ENCODE measurements at regions of chr4 and their contacts with region 1.

Region 1: DNA sequence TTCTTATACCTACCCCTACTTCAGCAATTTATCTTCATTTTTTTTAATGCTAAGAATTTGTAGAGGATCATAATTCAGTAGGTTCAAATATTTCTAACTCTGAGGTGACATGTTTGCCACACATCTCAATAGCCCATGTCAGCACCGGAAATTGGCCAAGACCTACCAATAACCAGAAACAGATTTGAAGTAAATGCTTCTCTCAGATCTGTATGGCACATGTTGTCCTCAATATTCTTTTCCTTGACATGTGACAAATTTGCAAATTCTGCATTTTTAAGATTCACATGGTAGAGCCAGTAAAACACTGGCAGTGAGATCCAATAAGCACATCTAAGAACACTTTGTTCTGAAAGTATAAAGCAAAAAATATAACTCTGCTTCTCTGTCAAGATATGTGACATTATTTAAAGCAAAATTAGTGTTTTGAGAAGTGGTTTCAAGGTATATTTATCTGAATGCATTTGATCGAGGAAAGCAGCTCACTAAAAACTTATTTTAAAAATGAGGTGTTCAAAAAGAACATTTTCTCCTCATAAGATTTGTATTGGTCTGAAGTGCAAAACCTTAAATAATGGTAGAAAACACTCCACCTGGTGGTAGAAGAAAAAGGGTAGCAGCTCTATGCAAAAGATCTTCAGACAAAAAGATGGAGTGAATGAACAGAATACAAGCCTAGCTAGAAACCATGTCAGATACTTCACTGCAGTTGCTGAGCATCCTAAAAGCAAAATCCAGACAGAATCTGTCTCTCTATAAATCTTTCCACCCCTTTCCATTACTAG is 513.8 kb upstream of the FAM241A start:
- DNase-seq: no peak
- H3K4me3 ChIP-seq: no peak overlapping the region
- H3K27ac ChIP-seq: no peak overlapping the region
- H3K4me1 ChIP-seq: no peaks in the 10 kb centered on the region; a peak in 1 of 4 replicates
- H3K27me3 ChIP-seq: peaks cover 4% of the 10 kb centered on the region; the same call in 1 of the 2 replicates
- CTCF ChIP-seq: peak; percentile 62
- EP300 ChIP-seq: no peak
- RAD21 ChIP-seq: peak; percentile 51; the same call in 1 of the 2 replicates

Region 2: DNA sequence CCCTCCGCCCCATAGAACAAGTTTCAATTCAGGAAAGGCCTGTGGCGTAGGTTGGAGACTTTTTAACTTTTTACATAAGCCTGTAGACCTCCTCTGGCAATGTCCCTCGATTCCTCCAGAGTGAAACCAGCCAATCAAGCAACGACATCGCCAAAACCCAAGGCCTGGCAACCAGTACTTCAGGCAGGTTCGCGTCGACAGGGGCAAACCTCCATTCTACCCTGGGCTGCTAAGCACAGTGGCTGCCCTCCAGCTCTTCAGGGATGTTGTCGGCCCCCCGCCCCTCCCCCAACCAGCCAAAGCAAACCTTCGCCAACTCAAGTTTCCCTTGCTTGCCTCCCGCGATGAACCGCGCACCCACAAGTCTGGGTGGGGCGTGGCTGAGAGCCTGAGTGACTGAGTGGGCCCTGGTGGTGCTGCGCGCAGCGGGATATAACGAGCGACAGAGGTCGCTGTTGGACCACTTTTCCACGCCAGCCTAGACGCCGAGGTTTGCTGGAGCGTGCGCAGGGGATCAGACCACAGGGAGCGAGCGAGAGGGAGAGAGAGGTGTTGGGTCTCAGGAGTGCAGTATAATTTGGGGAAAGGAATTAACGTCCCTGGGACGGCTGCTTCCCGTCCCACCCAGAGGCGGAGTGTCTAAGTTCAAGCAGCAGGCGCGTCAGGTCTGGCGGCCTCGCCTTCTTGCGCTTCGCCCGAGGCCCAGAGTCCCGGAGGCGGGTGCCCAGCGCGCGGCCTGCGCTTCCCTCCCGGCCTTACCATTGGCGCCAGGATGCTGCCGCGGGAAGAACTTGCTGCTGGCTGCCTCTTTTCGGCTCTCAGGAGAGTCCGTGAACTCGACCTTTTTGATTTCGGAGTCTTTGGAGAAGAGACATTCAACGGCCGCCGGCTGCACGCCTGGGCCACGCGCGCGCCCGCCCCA is 999.6 kb before region 1 on chr4:
- CTCF ChIA-PET with region 1: interaction called, 33 read pairs
- POLR2A ChIA-PET with region 1: no interaction called
- DNase-seq: peak; percentile 89
- H3K4me3 ChIP-seq: peak overlapping the region; percentile 30 to 58
- H3K27ac ChIP-seq: no peak overlapping the region
- H3K4me1 ChIP-seq: peaks cover 0 to 9% of the 10 kb centered on the region in 2 experiments; a peak in 1 of 4 replicates
- H3K27me3 ChIP-seq: peaks cover 95% of the 10 kb centered on the region
- CTCF ChIP-seq: peak; percentile 86
- EP300 ChIP-seq: no peak
- RAD21 ChIP-seq: peak; percentile 94

Region 3: DNA sequence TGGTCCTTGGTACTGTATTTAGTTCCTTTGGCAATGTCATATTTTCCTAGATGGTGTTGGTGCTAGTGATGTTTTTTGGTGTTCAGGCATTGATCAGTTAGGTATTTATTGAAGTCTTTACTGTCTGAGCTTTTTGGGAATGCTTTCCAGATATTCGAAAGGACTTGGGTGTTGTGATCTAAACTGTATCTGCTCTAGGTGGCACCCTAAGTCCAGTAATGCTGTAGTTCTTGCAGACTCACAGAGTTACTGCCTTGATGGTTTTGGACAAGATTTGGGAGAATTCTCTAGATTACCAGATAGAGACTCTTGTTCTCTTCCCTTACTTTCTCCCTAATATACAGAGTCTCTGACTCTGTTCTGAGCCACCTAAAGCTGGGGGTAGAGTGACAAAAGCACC is 495.0 kb before region 1 on chr4:
- CTCF ChIA-PET with region 1: interaction called, 13 read pairs
- POLR2A ChIA-PET with region 1: no interaction called
- DNase-seq: no peak
- H3K4me3 ChIP-seq: no peak overlapping the region
- H3K27ac ChIP-seq: no peak overlapping the region
- H3K4me1 ChIP-seq: no peaks in the 10 kb centered on the region
- H3K27me3 ChIP-seq: 0 out of 2 replicates have a peak, but pooled peaks cover 8% of the 10 kb centered on the region
- CTCF ChIP-seq: no peak
- EP300 ChIP-seq: no peak
- RAD21 ChIP-seq: peak; percentile 59